ENCODE measurements at regions of chr4 and their contacts with region 1.

Region 1: GRCh38 chr4:73729534-73730165 is 10.7 kb upstream of the CXCL8 start:
- DNase-seq: peak; percentile 81
- H3K4me3 Mint-ChIP-seq: no peak overlapping the region
- H3K27ac Mint-ChIP-seq: no peak overlapping the region
- H3K4me1 Mint-ChIP-seq: peaks cover 42% of the 10 kb centered on the region
- H3K27me3 Mint-ChIP-seq: no peaks in the 10 kb centered on the region
- CTCF ChIP-seq: peak; percentile 72

Region 2: DNA sequence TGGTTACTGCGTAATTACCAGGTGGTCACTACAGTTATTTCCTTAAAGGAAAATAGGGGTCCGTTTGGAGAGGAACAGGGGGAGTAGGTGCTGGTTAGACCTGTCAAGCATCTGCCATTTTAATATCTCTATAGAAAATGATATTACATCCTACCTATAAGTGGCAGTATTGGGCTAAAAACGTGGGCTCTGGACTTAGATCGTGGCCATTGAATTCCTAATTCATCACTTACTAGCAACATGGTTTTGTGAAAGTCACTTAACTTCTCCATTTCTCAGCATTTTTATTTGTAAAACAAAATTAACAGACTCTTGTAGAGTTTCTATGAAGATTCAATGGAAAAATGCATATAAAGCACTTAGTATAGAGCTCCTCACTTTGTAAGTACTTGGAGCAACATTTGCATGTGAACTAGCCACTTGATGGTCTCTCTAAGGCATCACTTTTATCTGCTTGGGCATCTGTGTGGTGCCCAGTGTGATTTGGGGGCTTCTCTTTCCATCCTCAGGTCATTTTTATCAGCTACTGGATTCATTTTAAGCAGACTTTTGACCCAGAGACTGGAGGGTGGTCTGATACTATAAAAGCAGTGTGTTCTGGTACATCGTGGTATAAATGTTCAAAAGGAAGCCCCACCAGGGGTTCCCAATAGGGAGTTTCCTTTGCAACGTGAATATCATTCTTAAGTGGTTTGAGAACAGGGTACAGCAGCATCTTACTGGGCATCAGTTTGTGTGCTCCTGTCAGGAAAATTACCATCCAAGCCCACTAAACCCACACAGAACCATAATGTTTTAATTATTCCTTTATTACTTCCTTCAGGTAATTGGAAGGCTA is 66.7 kb before region 1 on chr4:
- CTCF ChIA-PET with region 1: interaction called, 31 read pairs
- POLR2A ChIA-PET with region 1: interaction called, 3 read pairs
- intact Hi-C with region 1: loop called (anchors 1 kb)
- DNase-seq: peak; percentile 70
- H3K4me3 Mint-ChIP-seq: no peak overlapping the region
- H3K27ac Mint-ChIP-seq: peak overlapping the region; percentile 23
- H3K4me1 Mint-ChIP-seq: peaks cover 7% of the 10 kb centered on the region
- H3K27me3 Mint-ChIP-seq: no peaks in the 10 kb centered on the region
- CTCF ChIP-seq: peak; percentile 64

Region 3: GRCh38 chr4:73704314-73705055 is 25.2 kb before region 1 on chr4:
- CTCF ChIA-PET with region 1: interaction called, 10 read pairs
- POLR2A ChIA-PET with region 1: interaction called, 6 read pairs
- intact Hi-C with region 1: no loop called
- DNase-seq: peak; percentile 99
- H3K4me3 Mint-ChIP-seq: peak overlapping the region; percentile 29
- H3K27ac Mint-ChIP-seq: peak overlapping the region; percentile 95
- H3K4me1 Mint-ChIP-seq: peaks cover 58% of the 10 kb centered on the region
- H3K27me3 Mint-ChIP-seq: no peaks in the 10 kb centered on the region
- CTCF ChIP-seq: no peak

Region 4: DNA sequence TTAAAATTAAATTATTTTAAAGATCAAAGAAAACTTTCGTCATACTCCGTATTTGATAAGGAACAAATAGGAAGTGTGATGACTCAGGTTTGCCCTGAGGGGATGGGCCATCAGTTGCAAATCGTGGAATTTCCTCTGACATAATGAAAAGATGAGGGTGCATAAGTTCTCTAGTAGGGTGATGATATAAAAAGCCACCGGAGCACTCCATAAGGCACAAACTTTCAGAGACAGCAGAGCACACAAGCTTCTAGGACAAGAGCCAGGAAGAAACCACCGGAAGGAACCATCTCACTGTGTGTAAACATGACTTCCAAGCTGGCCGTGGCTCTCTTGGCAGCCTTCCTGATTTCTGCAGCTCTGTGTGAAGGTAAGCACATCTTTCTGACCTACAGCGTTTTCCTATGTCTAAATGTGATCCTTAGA is 10.7 kb after region 1 on chr4 and contains the start of gene CXCL8:
- CTCF ChIA-PET with region 1: interaction called, 10 read pairs
- POLR2A ChIA-PET with region 1: interaction called, 3 read pairs
- intact Hi-C with region 1: no loop called
- DNase-seq: peak; percentile 99
- H3K4me3 Mint-ChIP-seq: peak within 1 kb of the TSS; percentile 70
- H3K27ac Mint-ChIP-seq: peak within 1 kb of the TSS; percentile 56
- H3K4me1 Mint-ChIP-seq: peaks cover 18% of the 10 kb centered on the region
- H3K27me3 Mint-ChIP-seq: no peaks in the 10 kb centered on the region
- CTCF ChIP-seq: no peak
- total RNA-seq, gene CXCL8: 17.0 and 36.2 TPM in 2 replicates

Region 5: DNA sequence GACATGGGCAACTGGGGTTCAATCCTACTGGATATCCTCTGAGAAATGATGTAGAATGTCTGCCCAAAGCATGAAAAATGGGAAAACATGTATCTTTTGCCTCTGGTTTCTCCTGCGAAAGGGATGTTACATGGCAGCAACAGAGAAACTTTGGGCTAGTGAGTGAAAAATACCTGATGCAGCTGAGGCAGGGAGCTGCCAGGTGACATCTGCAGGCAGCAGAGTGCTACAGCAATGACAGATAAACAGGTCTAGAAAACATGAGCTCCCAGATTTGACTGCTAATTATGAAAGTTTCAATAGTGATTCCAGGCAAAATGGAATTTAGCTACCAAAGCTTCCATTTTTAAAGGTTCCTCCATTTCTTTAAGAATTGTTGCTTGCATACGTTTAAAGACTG is 134.7 kb after region 1 on chr4:
- CTCF ChIA-PET with region 1: interaction called, 72 read pairs
- POLR2A ChIA-PET with region 1: interaction called, 6 read pairs
- intact Hi-C with region 1: loop called (anchors 1 kb)
- DNase-seq: peak; percentile 64
- H3K4me3 Mint-ChIP-seq: no peak overlapping the region
- H3K27ac Mint-ChIP-seq: no peak overlapping the region
- H3K4me1 Mint-ChIP-seq: peaks cover 29% of the 10 kb centered on the region
- H3K27me3 Mint-ChIP-seq: no peaks in the 10 kb centered on the region
- CTCF ChIP-seq: peak; percentile 74

Region 6: DNA sequence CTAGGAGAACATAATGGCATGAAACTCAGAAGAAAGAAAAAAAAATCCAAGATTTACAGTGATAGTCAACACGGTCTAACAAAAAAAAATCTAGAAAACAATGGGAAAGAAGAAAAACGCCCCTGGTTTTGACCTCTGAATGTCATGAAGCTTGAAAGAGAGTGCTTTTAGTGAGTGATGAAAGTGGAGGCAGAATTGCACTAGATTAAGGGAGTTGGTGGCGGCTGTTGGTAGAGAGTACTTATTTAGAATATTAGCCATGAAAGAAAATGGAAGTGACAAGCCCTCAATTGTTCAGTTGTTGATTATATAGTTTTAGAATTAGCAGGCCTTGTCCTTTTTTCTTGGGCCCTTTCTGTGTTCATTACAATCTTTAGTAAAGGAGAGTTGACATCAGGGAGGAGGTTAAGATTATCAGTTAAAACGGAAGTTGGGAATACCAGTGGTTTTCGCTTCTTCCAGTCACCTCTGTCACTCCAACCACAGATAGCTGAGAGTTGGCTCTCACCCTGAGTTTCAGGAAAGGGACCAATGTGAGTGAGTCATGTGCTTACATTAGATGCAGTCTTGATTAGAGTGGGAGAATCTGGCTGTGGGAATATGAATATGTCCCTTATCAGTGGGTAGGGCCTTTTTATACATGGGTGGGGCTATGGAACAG is 665.0 kb after region 1 on chr4:
- CTCF ChIA-PET with region 1: no interaction called
- POLR2A ChIA-PET with region 1: no interaction called
- intact Hi-C with region 1: no loop called
- DNase-seq: no peak
- H3K4me3 Mint-ChIP-seq: no peak overlapping the region
- H3K27ac Mint-ChIP-seq: peak overlapping the region; percentile 55
- H3K4me1 Mint-ChIP-seq: peaks cover 19% of the 10 kb centered on the region
- H3K27me3 Mint-ChIP-seq: no peaks in the 10 kb centered on the region
- CTCF ChIP-seq: no peak

Measured in MCF 10A (cell line).